ENCODE measurements at regions of chr19 and their contacts with region 1.

Region 1: DNA sequence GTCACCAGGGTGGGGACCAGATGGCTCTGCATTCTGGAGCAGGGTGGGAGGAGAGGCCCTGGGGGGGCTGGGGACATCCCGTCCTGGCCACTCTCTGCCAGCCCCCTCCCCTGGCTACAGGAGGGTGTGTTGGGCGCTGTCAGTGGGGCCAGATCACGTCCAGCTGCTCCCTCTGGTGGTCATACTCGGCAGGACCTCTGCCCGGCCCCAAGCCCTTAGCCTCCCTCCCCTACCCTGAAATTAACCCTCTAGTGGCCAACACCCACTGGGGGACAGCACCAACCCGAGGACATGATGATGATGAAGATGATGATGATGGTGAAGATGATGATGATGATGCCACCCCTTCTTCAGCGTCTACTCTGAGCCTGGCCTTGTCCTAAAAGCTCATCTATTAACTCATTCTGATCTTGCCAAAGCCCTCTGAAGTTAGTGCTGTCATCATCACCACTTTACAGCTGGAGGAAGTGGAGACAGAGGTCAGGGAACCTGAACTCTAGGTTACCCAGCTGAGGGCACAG is 590 bp upstream of the LGI4 start:
- DNase-seq: no peak
- H3K4me3 ChIP-seq: no peak overlapping the region
- CTCF ChIP-seq: peak; percentile 92

Region 2: GRCh38 chr19:35090506-35091237 is 44.8 kb before region 1 on chr19:
- CTCF ChIA-PET with region 1: interaction called, 28 read pairs
- POLR2A ChIA-PET with region 1: no interaction called
- DNase-seq: no peak
- H3K4me3 ChIP-seq: no peak overlapping the region
- CTCF ChIP-seq: peak; percentile 41

Region 3: GRCh38 chr19:35109395-35110112 is 25.9 kb before region 1 on chr19:
- CTCF ChIA-PET with region 1: interaction called, 78 read pairs
- POLR2A ChIA-PET with region 1: no interaction called
- DNase-seq: no peak
- H3K4me3 ChIP-seq: no peak overlapping the region
- CTCF ChIP-seq: no peak

Region 4: DNA sequence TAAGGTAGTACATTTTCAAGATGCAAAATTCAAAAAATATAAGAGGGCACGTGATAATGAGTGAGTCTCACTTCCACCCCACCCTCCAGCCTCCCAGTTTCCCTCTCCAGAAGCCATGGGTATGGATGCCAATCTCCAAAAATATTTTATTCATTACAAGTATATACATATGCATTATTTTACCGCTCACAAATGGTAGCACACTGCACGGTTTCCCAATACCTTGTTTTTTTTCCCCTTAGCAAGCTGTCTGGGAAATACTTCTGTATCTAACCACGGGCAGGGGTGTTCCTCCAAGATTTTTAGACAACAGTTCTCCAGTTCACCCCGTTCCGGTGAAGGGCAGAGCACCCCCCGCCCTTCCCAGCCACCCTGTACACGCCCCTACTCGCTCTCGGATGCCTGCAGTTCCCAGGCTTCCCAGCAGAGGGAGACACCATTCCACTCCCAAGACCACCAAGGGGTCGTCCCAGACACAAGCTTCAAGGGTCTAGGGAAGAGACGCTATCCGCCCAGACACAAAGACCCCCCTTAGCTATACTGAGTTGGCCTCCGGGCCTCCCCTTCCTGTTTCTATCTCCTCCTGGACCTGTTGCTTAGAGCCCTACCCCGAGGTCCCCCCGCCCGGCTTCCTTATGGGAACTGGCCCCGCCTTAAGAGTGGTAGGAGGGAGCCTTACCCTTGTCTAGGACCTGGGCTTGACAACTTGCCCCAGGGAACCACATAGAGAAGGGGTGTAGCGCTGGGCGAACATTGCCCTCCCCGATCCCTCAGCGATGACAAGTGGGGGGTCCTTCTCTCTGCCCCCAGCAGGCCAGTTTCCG is 20.9 kb before region 1 on chr19:
- CTCF ChIA-PET with region 1: interaction called, 78 read pairs
- POLR2A ChIA-PET with region 1: no interaction called
- DNase-seq: no peak
- H3K4me3 ChIP-seq: peak overlapping the region; percentile 6; the same call in 1 of the 2 replicates
- CTCF ChIP-seq: peak; percentile 96

Region 5: GRCh38 chr19:35124098-35125060 is 11.1 kb before region 1 on chr19:
- CTCF ChIA-PET with region 1: interaction called, 118 read pairs
- POLR2A ChIA-PET with region 1: no interaction called
- DNase-seq: peak; percentile 33
- H3K4me3 ChIP-seq: peak overlapping the region; percentile 91
- CTCF ChIP-seq: no peak

Region 6: DNA sequence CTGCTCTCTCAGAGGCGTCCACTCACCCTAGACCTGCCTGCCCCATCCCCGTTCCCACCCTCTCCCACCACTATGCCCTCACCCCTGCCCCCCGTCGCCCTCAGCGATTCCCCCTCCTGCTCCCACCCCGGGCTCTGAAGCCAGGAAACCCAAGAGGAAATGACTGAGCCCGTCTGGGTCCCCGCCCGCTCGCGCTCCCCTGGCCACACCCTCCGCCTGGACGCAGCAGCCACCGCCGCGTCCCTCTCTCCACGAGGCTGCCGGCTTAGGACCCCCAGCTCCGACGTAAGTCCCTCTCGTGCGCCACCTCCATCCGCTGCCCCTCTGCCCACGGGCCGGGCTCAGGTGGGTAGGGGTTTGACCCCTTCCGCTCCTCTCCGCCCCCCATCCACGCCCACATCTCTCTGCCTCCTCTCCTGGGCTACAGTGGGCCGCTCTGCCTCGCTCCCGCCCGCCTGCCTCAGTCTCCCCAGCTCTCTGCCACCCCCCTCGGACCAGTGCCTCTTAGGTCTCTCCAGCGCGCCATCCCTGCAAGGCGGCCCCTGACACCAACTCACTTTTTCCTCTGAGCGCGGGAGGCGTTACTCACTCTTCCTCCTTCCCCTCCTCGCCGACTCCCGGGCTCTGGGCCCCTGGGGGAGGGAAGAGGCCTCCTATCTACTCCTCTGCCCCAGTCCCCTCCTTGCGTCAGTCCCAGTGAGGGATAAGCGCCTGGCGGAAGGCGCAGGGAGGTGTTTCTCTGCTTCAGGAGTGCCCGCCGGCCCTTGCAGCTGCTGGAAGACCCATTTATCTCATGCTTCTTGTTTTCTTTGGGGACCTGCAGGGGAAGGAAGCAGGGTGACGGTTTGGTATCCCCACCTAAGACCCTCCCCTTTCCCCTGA is 19.3 kb after region 1 on chr19 and contains the start of gene FXYD5:
- CTCF ChIA-PET with region 1: interaction called, 104 read pairs
- POLR2A ChIA-PET with region 1: no interaction called
- DNase-seq: peak; percentile 29
- H3K4me3 ChIP-seq: peak within 1 kb of the TSS; percentile 89
- CTCF ChIP-seq: no peak

Measured in AG04449 (cell line).